Lower leg skin (tissue), 4 donors: ENCODE measurements at regions of chr17 and their contacts with region 1.

Region 1: GRCh38 chr17:78450696-78451345 is 72.4 kb downstream of the PGS1 start:
- DNase-seq: no peak
- H3K4me3 ChIP-seq: no peak overlapping the region
- CTCF ChIP-seq: no peak
- POLR2A ChIP-seq: no peak

Region 2: GRCh38 chr17:78337244-78338109 is 113.3 kb before region 1 on chr17:
- intact Hi-C with region 1: no loop called
- DNase-seq: no peak
- H3K4me3 ChIP-seq: no peak overlapping the region
- CTCF ChIP-seq: no peak
- POLR2A ChIP-seq: no peak

Region 3: GRCh38 chr17:78510141-78511075 is 59.6 kb after region 1 on chr17:
- intact Hi-C with region 1: loop called (anchors 5 kb)
- DNase-seq: no peak
- H3K4me3 ChIP-seq: no peak overlapping the region
- CTCF ChIP-seq: no peak
- POLR2A ChIP-seq: no peak